CD8-positive, alpha-beta memory T cell (primary cell): ENCODE measurements at regions of chr17 and their contacts with region 1.

Region 1: DNA sequence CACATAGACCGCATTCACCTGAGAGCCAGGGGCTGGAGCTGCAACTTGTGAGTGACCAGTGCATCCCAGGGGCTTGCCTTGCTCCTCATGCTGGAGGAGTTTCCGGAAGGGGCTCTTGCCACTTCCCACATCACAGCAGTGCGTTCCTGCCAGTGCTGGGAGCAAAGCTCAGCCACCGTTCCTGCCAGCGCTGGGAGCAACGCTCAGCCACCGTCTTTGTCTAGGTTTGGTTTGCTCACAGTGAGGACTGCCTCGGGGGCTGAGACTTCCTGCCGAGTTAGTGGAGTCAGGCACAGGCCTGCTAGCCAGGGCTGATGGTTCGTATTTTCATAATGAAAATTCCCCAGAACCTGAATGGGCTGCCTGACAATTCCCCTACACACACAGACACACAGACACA is 5.4 kb upstream of the CHRNE start:
- DNase-seq: peak in 1 of 5 donors; percentile 47
- H3K4me3 ChIP-seq: no peak overlapping the region
- H3K4me3 Mint-ChIP-seq: no peak overlapping the region
- H3K27ac ChIP-seq: no peak overlapping the region
- H3K27ac Mint-ChIP-seq: no peak overlapping the region
- H3K4me1 ChIP-seq: peaks cover 24% of the 10 kb centered on the region
- H3K4me1 Mint-ChIP-seq: peaks cover 5 to 12% (median 5%) of the 10 kb centered on the region in 3 donors
- H3K27me3 ChIP-seq: no peaks in the 10 kb centered on the region
- H3K27me3 Mint-ChIP-seq: no peaks in the 10 kb centered on the region

Region 2: DNA sequence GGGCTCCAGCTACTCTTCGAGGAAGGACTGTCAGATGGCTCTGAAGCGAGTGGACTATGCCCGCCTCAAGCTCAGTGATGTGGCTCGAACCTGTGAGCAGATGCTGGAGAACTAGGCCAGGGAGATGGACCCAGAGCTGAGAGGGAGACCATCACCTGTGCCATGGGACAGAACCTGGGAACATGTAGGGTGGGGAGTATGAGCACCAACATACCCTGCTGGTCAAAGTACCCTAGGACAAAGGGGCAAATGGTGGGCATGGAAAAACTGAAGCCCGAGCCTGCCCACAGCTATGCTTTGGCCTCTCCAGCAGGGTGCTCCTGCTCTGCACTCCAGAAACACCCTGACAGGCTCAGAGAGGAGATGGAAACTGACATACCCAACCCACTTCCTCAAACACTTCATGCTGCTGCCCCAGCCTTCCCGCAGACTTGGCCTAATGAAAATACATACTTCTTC is 175.2 kb before region 1 on chr17:
- CTCF ChIA-PET with region 1: no interaction called
- POLR2A ChIA-PET with region 1: no interaction called
- DNase-seq: no peak
- H3K4me3 ChIP-seq: no peak overlapping the region
- H3K4me3 Mint-ChIP-seq: peak overlapping the region in 4 of 7 donors; percentile 47 to 99 (median 80)
- H3K27ac ChIP-seq: no peak overlapping the region
- H3K27ac Mint-ChIP-seq: peak overlapping the region in 2 of 8 donors; percentile 68 to 71
- H3K4me1 ChIP-seq: peaks cover 1% of the 10 kb centered on the region
- H3K4me1 Mint-ChIP-seq: peaks cover 22 to 31% (median 27%) of the 10 kb centered on the region in 3 donors
- H3K27me3 ChIP-seq: no peaks in the 10 kb centered on the region
- H3K27me3 Mint-ChIP-seq: peaks cover 0 to 1% of the 10 kb centered on the region in 2 donors

Region 3: GRCh38 chr17:4823373-4824089 is 84.8 kb before region 1 on chr17:
- CTCF ChIA-PET with region 1: no interaction called
- POLR2A ChIA-PET with region 1: no interaction called
- DNase-seq: no peak
- H3K4me3 ChIP-seq: no peak overlapping the region
- H3K4me3 Mint-ChIP-seq: no peak overlapping the region
- H3K27ac ChIP-seq: no peak overlapping the region
- H3K27ac Mint-ChIP-seq: no peak overlapping the region
- H3K4me1 ChIP-seq: no peaks in the 10 kb centered on the region
- H3K4me1 Mint-ChIP-seq: no peaks in the 10 kb centered on the region
- H3K27me3 ChIP-seq: no peaks in the 10 kb centered on the region
- H3K27me3 Mint-ChIP-seq: peaks cover 0 to 1% of the 10 kb centered on the region in 2 donors

Region 4: DNA sequence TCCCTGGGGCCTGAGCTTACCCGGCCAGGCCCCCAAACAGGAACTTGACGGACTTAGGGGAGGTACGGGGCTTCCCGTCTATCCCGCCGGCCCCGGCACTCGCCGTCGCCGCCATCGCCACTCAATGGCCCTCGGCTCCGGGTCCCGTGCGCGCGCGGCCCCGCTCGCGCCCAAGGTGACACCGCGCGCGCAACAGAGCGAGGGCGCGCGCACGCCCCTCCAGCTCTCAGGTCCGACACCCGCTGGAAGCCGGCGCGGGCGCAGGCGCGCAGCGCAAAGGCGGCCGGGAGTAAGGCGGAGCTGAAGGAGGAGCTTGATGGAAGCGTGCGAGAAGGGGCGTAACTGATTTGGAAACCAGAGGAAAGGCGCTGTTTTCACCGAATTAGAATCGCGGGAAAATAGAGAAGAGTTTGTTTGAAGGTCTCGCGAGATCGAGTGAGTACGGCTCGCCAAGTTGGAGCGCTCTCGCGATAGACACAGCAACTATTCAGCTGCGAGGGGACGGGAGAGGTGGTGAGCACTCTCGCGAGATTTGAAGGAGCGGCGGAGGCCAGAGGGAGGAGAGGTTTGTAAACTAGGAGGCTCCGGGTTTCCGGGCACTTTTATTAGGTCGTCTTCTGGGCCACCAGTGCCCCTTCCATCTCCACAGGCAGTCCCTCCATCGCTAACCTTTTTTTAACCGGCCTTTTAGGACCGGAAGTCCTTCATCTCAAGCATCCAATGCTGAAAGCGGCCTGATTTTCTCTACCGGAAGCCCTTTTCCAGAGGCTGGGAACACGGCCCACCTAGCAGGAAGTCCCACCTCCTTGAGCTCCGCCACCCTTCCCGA is 31.7 kb after region 1 on chr17 and contains the starts of genes RNF167 and SLC25A11:
- CTCF ChIA-PET with region 1: interaction called, 25 read pairs
- POLR2A ChIA-PET with region 1: interaction called, 15 read pairs
- DNase-seq: peak; percentile 89 to 99 (median 97)
- H3K4me3 ChIP-seq: peak within 1 kb of the TSS; percentile 97
- H3K4me3 Mint-ChIP-seq: peak within 1 kb of the TSS; percentile 86 to 97 (median 96)
- H3K27ac ChIP-seq: peak within 1 kb of the TSS; percentile 85
- H3K27ac Mint-ChIP-seq: peak within 1 kb of the TSS; percentile 89 to 98 (median 96)
- H3K4me1 ChIP-seq: peaks cover 57% of the 10 kb centered on the region
- H3K4me1 Mint-ChIP-seq: peaks cover 56 to 79% (median 56%) of the 10 kb centered on the region in 3 donors
- H3K27me3 ChIP-seq: no peaks in the 10 kb centered on the region
- H3K27me3 Mint-ChIP-seq: peaks cover 0 to 4% of the 10 kb centered on the region in 2 donors
- total RNA-seq, gene RNF167: 187 to 192 TPM
- total RNA-seq, gene SLC25A11: 90.0 to 101 TPM

Region 5: GRCh38 chr17:4980644-4981216 is 72.4 kb after region 1 on chr17:
- CTCF ChIA-PET with region 1: interaction called, 10 read pairs
- POLR2A ChIA-PET with region 1: no interaction called
- DNase-seq: peak in 3 of 5 donors; percentile 26 to 59 (median 48)
- H3K4me3 ChIP-seq: no peak overlapping the region
- H3K4me3 Mint-ChIP-seq: peak overlapping the region in 1 of 7 donors; percentile 33
- H3K27ac ChIP-seq: no peak overlapping the region
- H3K27ac Mint-ChIP-seq: peak overlapping the region; percentile 55 to 89 (median 78)
- H3K4me1 ChIP-seq: peaks cover 11% of the 10 kb centered on the region
- H3K4me1 Mint-ChIP-seq: peaks cover 12 to 21% (median 19%) of the 10 kb centered on the region in 3 donors
- H3K27me3 ChIP-seq: no peaks in the 10 kb centered on the region
- H3K27me3 Mint-ChIP-seq: no peaks in the 10 kb centered on the region

Region 6: GRCh38 chr17:4986951-4987766 is 78.9 kb after region 1 on chr17 and contains the start of gene CAMTA2:
- CTCF ChIA-PET with region 1: interaction called, 14 read pairs
- POLR2A ChIA-PET with region 1: no interaction called
- DNase-seq: peak; percentile 80 to 92 (median 87)
- H3K4me3 ChIP-seq: peak within 1 kb of the TSS; percentile 94
- H3K4me3 Mint-ChIP-seq: peak within 1 kb of the TSS; percentile 91 to 96 (median 93)
- H3K27ac ChIP-seq: peak within 1 kb of the TSS; percentile 88
- H3K27ac Mint-ChIP-seq: peak within 1 kb of the TSS; percentile 87 to 98 (median 95)
- H3K4me1 ChIP-seq: peaks cover 33% of the 10 kb centered on the region
- H3K4me1 Mint-ChIP-seq: peaks cover 31 to 46% (median 42%) of the 10 kb centered on the region in 3 donors
- H3K27me3 ChIP-seq: no peaks in the 10 kb centered on the region
- H3K27me3 Mint-ChIP-seq: peaks cover 0 to 1% of the 10 kb centered on the region in 2 donors
- total RNA-seq, gene CAMTA2: 85.6 to 90.6 TPM

Region 7: DNA sequence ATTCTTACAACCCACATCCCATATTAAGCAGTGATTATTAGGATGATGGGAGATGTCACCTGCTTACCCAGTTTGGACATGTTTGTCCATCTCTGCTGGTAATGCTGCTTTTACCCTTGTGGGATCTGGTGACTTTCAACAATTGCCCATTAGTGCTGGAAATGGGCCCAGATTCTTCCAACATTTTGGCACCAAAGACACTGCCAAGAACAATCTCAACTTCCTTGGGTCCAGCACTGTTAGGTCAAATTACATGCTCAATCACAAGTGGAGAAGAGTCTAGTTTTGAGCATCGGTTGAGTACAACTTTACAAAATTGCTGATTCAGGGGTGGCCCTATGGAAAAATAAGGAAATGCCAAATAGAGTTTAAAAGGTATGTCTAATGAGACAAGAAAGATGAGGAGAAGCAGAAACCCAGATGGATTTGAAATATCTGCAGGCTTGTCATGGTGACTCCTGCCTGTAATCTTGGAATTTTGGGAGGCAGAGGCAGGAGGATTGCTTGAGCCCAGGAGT is 157.0 kb after region 1 on chr17:
- CTCF ChIA-PET with region 1: interaction called, 17 read pairs
- POLR2A ChIA-PET with region 1: no interaction called
- DNase-seq: no peak
- H3K4me3 ChIP-seq: no peak overlapping the region
- H3K4me3 Mint-ChIP-seq: no peak overlapping the region
- H3K27ac ChIP-seq: no peak overlapping the region
- H3K27ac Mint-ChIP-seq: no peak overlapping the region
- H3K4me1 ChIP-seq: no peaks in the 10 kb centered on the region
- H3K4me1 Mint-ChIP-seq: peaks cover 0 to 7% (median 6%) of the 10 kb centered on the region in 3 donors
- H3K27me3 ChIP-seq: no peaks in the 10 kb centered on the region
- H3K27me3 Mint-ChIP-seq: peaks cover 0 to 1% of the 10 kb centered on the region in 2 donors